ENCODE measurements at regions of chr19 and their contacts with region 1.

Region 1: GRCh38 chr19:18058208-18059030 is 28.3 kb downstream of the IL12RB1 start:
- DNase-seq: peak; percentile 66 to 97
- H3K4me3 ChIP-seq: no peak overlapping the region
- CTCF ChIP-seq: peak in 1 of 3 donors; percentile 95
- POLR2A ChIP-seq: no peak

Region 2: GRCh38 chr19:18007044-18007916 is 51.1 kb before region 1 on chr19:
- intact Hi-C with region 1: loop called (anchors 2 kb)
- DNase-seq: peak; percentile 75 to 97
- H3K4me3 ChIP-seq: peak overlapping the region; percentile 23
- CTCF ChIP-seq: peak in 1 of 3 donors; percentile 82
- POLR2A ChIP-seq: no peak

Measured in lower leg skin (tissue), 4 donors.